CD8-positive, alpha-beta memory T cell (primary cell): ENCODE measurements at regions of chr1 and their contacts with region 1.

Region 1: DNA sequence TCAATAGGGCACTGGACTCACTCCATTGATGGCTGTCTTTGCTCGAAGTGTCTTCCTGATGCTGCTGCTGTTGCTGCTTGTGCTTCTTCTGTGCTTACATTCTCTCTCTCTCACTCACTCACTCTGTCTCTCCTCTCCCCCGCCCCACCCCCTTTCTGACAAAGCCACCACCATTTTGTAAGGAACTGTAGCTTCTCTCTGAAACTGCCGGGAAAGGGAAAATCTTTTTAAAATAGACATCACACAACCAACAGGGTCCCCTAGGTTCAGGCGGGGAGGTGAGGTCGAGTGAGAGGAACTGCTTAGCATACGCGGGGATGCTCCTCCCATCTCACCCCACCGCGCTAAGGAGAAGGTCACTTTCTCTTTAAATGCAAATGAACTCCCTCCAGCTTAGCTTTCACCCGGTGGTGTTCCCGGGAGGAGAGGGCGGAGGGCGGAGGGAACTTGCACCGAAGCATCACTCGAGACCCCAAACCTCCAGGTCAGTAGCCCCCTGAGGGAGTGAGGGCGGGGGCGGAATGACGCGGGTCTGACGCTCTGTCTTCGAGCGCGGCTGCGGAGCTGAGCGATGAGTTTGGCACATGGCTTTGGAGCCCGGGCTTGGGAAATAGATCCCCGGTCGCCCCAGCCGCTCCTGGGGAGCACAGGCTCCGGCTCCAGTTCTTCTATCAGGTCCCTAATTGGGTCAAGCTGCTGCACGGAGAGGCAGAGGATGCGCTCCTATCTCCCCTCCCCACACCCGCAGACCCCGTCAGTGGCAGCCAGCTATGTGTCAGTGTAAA is at the start of gene CCDC28B:
- DNase-seq: peak; percentile 39 to 75 (median 56)
- H3K4me3 ChIP-seq: peak within 1 kb of the TSS; percentile 96
- H3K4me3 Mint-ChIP-seq: peak within 1 kb of the TSS; percentile 83 to 98 (median 92)
- H3K27ac ChIP-seq: peak within 1 kb of the TSS; percentile 81
- H3K27ac Mint-ChIP-seq: peak within 1 kb of the TSS; percentile 86 to 99 (median 96)
- H3K4me1 ChIP-seq: peaks cover 49% of the 10 kb centered on the region
- H3K4me1 Mint-ChIP-seq: peaks cover 48 to 79% (median 54%) of the 10 kb centered on the region in 3 donors
- H3K27me3 ChIP-seq: no peaks in the 10 kb centered on the region
- H3K27me3 Mint-ChIP-seq: peaks cover 0 to 2% of the 10 kb centered on the region in 2 donors
- total RNA-seq, gene CCDC28B: 20.6 to 21.0 TPM

Region 2: DNA sequence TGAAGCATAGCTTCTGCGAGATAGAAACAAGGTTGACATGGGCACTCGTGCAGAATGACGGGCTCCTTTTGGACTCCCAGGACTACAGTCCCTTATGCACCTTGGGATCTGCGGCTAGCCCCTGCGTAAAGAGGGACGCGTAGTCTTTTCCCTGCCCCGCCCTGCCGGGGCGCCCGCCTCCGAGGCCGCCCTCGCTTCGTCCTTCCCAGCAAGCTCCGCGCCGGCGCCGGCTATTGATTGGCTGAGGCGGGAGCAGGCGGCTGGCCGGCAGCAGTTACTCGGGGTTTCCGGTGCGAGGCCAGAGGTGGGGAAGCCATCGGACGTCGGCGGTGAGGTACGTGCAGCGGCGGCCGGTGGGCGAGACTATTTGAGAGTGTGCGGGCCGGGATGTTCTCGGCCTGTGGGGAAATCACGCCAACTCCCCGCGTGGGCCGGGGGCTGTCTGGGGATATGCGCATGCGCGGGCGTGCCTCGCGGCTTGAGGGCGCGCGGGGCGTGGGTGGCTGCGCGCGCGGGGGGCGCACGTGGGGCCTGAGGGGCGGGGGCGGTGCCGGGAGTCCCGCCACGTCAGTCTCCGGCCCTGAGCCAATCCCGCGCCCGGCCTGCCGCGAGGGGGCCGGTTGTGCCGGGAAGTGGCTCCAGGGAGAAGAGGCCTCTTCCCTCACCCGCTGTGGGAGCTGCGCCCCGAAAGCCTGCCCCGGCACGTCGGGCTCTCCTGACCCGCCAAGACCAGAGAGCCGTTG is 20.8 kb before region 1 on chr1 and contains the start of gene TXLNA:
- CTCF ChIA-PET with region 1: interaction called, 11 read pairs
- POLR2A ChIA-PET with region 1: interaction called, 12 read pairs
- DNase-seq: peak; percentile 83 to 91 (median 87)
- H3K4me3 ChIP-seq: peak within 1 kb of the TSS; percentile 74
- H3K4me3 Mint-ChIP-seq: peak within 1 kb of the TSS; percentile 86 to 99 (median 91)
- H3K27ac ChIP-seq: peak within 1 kb of the TSS; percentile 88
- H3K27ac Mint-ChIP-seq: peak within 1 kb of the TSS; percentile 91 to 98 (median 94)
- H3K4me1 ChIP-seq: peaks cover 28% of the 10 kb centered on the region
- H3K4me1 Mint-ChIP-seq: peaks cover 35 to 51% (median 45%) of the 10 kb centered on the region in 3 donors
- H3K27me3 ChIP-seq: no peaks in the 10 kb centered on the region
- H3K27me3 Mint-ChIP-seq: no peaks in the 10 kb centered on the region
- total RNA-seq, gene TXLNA: 99.0 to 99.9 TPM

Region 3: DNA sequence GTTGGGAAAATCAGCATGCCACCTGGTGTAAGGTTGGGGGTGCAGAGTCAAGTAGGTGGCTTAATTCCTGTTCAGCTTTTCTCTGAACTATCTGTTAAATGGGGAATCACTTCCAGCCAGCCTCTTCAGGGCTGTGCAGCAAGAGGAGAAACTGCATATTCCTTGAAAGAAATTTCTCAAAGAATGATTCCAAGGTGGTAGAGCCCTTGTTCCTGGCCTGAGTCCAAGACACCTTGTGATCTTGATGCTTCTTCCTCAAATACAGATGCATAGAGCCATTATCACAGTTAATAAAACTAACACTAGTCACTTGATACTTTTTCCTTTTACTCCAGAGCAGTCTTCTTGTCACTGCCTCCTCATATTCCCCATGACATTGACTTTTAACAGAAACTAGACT is 15.8 kb before region 1 on chr1:
- CTCF ChIA-PET with region 1: interaction called, 11 read pairs
- POLR2A ChIA-PET with region 1: interaction called, 12 read pairs
- DNase-seq: no peak
- H3K4me3 ChIP-seq: no peak overlapping the region
- H3K4me3 Mint-ChIP-seq: peak overlapping the region in 1 of 7 donors; percentile 18
- H3K27ac ChIP-seq: no peak overlapping the region
- H3K27ac Mint-ChIP-seq: peak overlapping the region in 2 of 8 donors; percentile 4 to 17
- H3K4me1 ChIP-seq: peaks cover 18% of the 10 kb centered on the region
- H3K4me1 Mint-ChIP-seq: peaks cover 44 to 59% (median 57%) of the 10 kb centered on the region in 3 donors
- H3K27me3 ChIP-seq: no peaks in the 10 kb centered on the region
- H3K27me3 Mint-ChIP-seq: no peaks in the 10 kb centered on the region